ENCODE measurements at regions of chr1 and their contacts with region 1.

Region 1: DNA sequence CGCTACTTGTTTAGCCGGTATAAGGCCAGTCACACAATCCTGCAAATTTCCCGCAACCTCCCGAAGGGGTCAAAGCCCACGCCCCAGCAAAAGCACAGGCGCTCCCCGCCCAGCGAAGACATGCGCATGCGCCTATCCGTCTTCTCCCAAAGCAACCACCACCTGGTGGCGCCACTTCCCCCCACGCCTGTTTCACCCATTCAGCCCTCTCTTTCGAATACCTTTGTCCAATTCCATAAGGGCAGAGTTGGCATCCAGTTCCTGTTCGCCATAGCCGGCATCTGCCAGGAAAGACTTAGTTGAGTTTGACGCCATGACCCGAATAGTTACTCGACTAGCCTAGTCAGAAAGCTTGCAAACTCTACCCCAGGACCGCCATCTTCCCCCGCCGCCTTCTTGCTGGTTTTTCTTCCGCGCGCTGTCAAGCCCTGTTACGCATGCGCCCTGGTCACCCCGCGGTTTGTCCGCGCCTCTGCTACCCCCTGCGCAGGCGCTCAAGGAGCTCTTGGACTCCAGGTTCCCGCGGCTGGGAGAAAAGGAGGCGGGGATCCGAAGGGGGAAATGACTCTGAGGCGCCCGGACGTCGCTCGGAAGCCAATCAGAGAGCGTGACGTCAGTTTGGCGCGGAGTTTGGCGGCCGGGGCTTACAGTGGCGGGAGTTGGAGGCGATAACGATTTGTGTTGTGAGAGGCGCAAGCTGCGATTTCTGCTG is at the starts of genes DTL and INTS7:
- DNase-seq: peak; percentile 98
- ATAC-seq: peak; percentile 92
- H3K4me3 Mint-ChIP-seq: peak within 1 kb of the TSS; percentile 98
- H3K27ac Mint-ChIP-seq: peak within 1 kb of the TSS; percentile 99
- H3K4me1 Mint-ChIP-seq: peaks cover 32% of the 10 kb centered on the region
- H3K27me3 Mint-ChIP-seq: peaks cover 3% of the 10 kb centered on the region; the same call in 1 of the 2 replicates
- CTCF ChIP-seq: peak; percentile 66; the same call in 1 of the 2 replicates
- total RNA-seq, gene DTL: 38.8 to 52.3 TPM (median 43.0 TPM) in 3 replicates
- total RNA-seq, gene INTS7: 16.3 to 17.3 TPM (median 17.2 TPM) in 3 replicates

Region 2: DNA sequence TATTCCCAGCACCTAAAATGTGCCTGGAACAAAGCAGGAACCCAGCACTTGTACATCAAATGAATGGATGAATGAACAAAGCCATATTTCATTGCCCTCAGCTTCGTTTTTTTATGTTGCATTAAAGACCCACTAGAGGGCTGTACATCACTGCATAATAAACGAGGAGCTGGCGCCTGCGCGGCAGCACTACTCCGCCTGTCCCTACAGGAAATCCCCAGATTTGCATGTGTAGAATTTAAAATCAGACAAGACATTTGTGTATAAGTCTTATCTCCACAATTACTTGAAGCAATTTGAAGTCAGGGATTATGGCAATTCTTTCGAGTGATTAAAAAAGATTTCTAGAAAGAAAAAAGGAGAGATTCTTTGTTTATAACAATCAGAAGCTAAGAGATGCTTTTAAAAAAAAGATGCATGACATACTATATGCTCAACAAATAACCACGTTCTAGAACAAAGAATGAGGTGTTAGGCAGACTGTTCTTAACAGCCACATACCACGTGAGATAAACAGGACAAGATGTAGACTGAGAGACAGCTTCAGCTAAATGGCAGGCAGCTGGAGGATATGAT is 354.4 kb before region 1 on chr1:
- CTCF ChIA-PET with region 1: interaction called, 75 read pairs
- POLR2A ChIA-PET with region 1: interaction called, 7 read pairs
- DNase-seq: peak; percentile 46
- ATAC-seq: peak; percentile 57
- H3K4me3 Mint-ChIP-seq: no peak overlapping the region
- H3K27ac Mint-ChIP-seq: no peak overlapping the region
- H3K4me1 Mint-ChIP-seq: peaks cover 10% of the 10 kb centered on the region
- H3K27me3 Mint-ChIP-seq: no peaks in the 10 kb centered on the region
- CTCF ChIP-seq: peak; percentile 22; the same call in 1 of the 2 replicates

Region 3: DNA sequence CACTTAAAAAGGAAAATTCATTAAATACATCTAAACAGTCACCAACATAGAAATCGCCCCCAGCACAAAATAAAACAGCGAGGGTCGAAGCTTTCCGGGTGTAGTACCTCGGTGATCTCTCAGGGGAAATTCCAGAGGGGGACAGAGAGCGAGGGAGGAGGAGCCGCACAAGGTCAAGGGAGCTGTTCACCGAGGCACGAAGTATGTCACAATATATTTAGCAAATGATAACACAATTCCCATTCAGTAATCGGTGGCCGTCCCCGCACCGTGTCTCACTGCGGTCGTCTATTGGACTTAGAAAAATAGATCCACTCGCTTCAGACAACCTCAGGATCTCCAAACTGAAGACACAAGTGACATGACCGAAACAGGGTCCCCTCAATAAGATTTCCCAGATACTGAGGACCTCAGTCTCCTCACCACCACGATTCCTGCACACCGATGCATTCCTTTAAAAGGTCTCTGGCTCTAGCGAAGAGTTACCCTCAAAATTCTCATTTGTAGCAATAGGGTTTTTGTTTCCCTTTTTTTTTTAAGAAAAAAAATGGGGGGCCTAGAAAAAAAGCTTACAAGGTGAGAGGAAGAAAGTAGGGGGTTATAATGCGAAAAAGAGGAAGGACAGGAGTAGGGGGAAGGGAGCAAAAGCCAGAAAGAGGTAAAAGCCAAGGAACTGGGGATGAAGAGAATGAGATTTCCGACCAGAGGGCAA is 205.8 kb before region 1 on chr1:
- CTCF ChIA-PET with region 1: interaction called, 10 read pairs
- POLR2A ChIA-PET with region 1: no interaction called
- DNase-seq: peak; percentile 43
- ATAC-seq: peak; percentile 67
- H3K4me3 Mint-ChIP-seq: peak overlapping the region; percentile 84
- H3K27ac Mint-ChIP-seq: no peak overlapping the region
- H3K4me1 Mint-ChIP-seq: peaks cover 12% of the 10 kb centered on the region
- H3K27me3 Mint-ChIP-seq: peaks cover 18% of the 10 kb centered on the region
- CTCF ChIP-seq: no peak

Region 4: DNA sequence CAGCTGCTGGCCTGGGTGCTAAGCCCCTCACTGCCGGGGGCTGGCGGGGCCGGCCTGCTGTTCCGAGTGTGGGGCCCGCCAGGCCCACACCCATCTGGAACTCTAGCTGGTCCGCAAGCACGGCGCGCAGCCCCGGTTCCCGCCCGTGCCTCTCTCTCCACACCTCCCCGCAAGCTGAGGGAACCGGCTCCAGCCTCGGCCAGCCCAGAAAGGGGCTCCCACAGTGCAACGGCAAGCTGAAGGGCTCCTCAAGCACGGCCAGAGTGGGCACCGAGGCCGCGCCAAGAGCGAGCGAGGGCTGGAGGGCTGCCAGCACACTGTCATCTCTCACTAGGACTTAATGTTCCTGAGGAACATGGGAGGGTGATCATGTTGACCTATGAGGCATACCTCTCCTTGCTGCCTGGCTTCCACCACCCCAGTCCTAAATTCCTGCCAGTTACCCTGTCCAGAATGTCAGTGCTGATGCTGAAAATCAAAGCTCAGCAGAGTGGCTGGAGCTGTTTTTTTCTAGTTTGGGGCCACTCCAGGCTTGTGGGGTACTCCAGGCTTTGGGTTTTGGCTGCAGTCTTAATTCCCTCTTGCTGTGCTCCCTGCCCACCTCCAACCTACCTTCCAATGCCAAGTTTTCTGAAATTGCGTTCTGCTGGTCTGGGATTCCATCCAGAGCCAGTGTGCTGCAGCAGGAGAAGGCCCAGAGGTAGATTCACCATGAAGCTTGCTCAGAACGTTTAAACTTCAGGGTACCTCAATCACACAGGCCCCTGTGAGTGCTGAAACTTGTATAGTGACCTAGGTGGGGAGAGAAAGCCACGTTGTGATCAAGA is 160.5 kb before region 1 on chr1:
- CTCF ChIA-PET with region 1: no interaction called
- POLR2A ChIA-PET with region 1: no interaction called
- DNase-seq: no peak
- ATAC-seq: no peak
- H3K4me3 Mint-ChIP-seq: no peak overlapping the region
- H3K27ac Mint-ChIP-seq: no peak overlapping the region
- H3K4me1 Mint-ChIP-seq: no peaks in the 10 kb centered on the region
- H3K27me3 Mint-ChIP-seq: peaks cover 4% of the 10 kb centered on the region; the same call in 1 of the 2 replicates
- CTCF ChIP-seq: no peak

Region 5: DNA sequence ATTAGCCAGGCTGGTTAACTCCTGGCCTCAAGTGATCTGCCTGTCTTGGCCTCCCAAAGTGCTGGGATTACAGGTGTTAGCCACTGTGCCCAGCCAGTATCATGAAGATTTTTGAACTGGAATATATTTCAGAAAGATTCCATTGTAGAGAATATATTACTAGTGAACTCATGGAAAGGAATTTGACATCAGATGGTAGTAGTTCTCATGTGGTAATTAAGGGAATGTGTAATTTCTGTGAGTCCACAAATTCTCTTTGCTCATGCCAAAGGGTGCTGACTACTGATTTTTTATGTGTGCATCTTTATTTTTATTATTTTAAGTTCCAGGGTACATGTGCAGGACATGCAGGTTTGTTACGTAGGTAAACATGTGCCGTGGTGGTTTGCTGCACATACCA is 10.7 kb after region 1 on chr1:
- CTCF ChIA-PET with region 1: interaction called, 16 read pairs
- POLR2A ChIA-PET with region 1: interaction called, 5 read pairs
- DNase-seq: no peak
- ATAC-seq: no peak
- H3K4me3 Mint-ChIP-seq: no peak overlapping the region
- H3K27ac Mint-ChIP-seq: no peak overlapping the region
- H3K4me1 Mint-ChIP-seq: peaks cover 2% of the 10 kb centered on the region
- H3K27me3 Mint-ChIP-seq: no peaks in the 10 kb centered on the region
- CTCF ChIP-seq: no peak

Region 6: DNA sequence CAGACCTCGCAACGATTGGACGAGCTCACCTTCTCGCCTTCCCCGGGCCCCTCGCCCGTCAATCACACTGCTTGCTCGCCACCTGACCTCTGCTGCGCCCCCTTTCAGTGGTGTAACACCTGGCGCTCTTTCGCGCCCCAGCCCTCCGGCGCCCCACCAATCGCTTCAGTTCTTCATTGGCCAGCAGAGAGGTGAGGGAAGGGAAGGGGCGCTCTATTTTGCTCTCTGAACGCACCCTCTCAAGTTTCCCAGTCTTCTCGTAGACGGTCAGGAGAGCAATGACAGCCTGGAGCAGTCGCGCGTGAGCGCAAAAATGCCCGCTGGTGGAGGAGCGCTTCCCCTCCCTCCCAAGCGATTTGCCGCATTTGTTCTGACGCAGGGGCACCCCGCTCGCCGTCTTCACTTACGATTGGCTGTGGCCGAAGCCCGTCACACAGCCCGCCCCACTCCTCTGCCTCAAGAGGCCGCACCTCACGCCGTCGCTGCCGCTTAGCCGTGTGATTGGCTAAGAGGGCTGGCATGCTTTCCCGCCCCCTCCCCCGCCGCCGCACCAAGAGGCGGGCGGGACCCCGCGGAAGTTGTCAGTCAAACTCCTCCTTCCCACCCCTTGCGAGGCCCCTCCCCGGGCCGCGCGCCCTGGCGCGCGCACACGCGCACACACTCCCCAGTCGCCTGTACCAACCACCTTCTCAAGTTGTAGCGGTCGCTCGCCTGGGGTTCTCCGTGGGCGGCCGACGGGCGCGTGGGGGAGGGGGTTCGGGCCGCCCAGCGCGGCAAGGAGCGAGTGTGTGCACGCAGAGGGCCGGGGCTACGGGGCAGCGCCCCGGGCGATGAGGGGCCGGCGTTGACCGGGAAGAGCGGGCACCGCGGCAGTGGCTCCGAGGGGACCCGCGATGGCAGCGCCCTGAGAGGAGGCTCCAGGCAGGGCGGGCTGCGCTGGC is 249.7 kb after region 1 on chr1 and contains the start of gene PPP2R5A:
- CTCF ChIA-PET with region 1: interaction called, 20 read pairs
- POLR2A ChIA-PET with region 1: interaction called, 7 read pairs
- DNase-seq: peak; percentile 99
- ATAC-seq: peak; percentile 93
- H3K4me3 Mint-ChIP-seq: peak within 1 kb of the TSS; percentile 98
- H3K27ac Mint-ChIP-seq: peak within 1 kb of the TSS; percentile 99
- H3K4me1 Mint-ChIP-seq: peaks cover 36% of the 10 kb centered on the region
- H3K27me3 Mint-ChIP-seq: no peaks in the 10 kb centered on the region
- CTCF ChIP-seq: no peak
- total RNA-seq, gene PPP2R5A: 32.0 to 35.9 TPM (median 32.1 TPM) in 3 replicates

Region 7: GRCh38 chr1:212414328-212415106 is 379.2 kb after region 1 on chr1 and contains the start of gene PACC1:
- CTCF ChIA-PET with region 1: interaction called, 14 read pairs
- POLR2A ChIA-PET with region 1: interaction called, 7 read pairs
- DNase-seq: peak; percentile 97
- ATAC-seq: peak; percentile 91
- H3K4me3 Mint-ChIP-seq: peak within 1 kb of the TSS; percentile 91
- H3K27ac Mint-ChIP-seq: peak within 1 kb of the TSS; percentile 99
- H3K4me1 Mint-ChIP-seq: peaks cover 31% of the 10 kb centered on the region
- H3K27me3 Mint-ChIP-seq: peaks cover 6% of the 10 kb centered on the region
- CTCF ChIP-seq: no peak
- total RNA-seq, gene PACC1: 15.0 to 19.5 TPM (median 15.7 TPM) in 3 replicates